ENCODE measurements at regions of chr22 and their contacts with region 1.

Region 1: DNA sequence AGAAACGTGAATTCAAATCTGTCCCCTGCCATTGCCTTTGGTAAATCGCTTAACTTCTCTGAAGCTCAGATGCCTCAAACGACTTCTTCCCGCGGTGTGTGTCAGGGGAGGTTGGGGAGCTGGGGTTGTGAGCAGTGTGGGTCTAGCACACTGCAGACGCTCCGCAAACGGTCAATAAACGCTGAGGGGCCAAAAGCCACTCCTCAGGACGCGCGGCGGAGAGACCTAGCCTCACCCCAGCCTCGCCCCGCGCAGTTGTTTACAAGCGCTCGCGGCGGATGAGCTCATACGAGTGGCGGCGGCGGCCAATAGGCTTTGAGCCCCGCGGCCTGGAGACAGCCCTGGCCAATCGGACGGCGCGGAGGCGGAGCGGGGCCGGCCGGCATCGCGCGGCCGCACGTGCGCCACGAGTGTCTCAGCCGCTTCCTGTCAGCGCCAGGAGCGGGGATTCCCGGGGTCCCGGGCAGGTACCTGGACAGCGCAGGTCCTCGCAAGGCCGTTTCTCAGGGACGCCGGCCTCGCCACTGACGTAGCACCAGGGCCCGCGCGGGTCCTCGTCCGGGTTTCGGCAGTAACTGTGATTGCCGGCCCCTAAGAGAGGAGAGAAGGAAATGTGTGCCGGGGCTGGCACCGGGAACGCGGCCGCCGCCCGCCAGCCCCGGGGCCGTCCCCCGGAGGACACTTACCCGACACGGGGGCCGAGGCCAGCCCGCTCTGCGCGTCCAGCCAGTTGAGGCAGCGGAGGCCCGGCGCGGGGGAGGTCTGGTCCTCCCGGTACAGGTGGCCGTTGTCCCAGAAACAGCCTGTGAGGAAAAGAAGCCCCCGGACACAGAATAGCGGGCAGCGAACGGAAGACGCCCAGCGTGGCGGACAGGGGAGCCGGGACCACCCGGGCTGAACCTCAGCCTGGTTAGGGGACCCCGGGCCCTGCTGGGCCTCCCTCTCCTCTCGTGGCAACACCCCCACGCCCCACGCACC is 1.5 kb downstream of the PIK3IP1 start:
- DNase-seq: peak; percentile 93
- H3K4me3 Mint-ChIP-seq: peak overlapping the region; percentile 82
- H3K27ac Mint-ChIP-seq: peak overlapping the region; percentile 70
- H3K4me1 Mint-ChIP-seq: peaks cover 13% of the 10 kb centered on the region
- H3K27me3 Mint-ChIP-seq: no peaks in the 10 kb centered on the region
- CTCF ChIP-seq: no peak

Region 2: DNA sequence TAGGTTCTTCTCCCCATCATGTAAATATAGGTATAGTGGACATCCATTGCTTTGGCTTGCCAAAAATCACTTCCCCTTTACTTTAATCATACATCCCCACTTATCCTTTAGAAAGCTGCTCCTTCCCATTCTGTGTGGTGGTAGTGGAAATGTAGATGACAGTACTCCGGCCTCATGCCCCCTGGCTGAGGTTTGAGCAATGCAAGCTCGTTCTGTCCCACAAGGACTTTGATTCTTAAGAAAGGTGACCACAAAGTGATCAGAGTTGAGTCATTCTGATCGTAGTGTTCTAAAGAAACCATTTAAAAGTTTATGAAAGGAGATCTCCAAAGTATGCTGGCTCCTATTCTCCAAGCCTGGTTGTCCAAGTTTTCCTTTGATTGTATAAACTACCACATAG is 310.9 kb before region 1 on chr22:
- CTCF ChIA-PET with region 1: no interaction called
- POLR2A ChIA-PET with region 1: no interaction called
- intact Hi-C with region 1: no loop called
- DNase-seq: no peak
- H3K4me3 Mint-ChIP-seq: no peak overlapping the region
- H3K27ac Mint-ChIP-seq: no peak overlapping the region
- H3K4me1 Mint-ChIP-seq: no peaks in the 10 kb centered on the region
- H3K27me3 Mint-ChIP-seq: no peaks in the 10 kb centered on the region
- CTCF ChIP-seq: no peak

Region 3: DNA sequence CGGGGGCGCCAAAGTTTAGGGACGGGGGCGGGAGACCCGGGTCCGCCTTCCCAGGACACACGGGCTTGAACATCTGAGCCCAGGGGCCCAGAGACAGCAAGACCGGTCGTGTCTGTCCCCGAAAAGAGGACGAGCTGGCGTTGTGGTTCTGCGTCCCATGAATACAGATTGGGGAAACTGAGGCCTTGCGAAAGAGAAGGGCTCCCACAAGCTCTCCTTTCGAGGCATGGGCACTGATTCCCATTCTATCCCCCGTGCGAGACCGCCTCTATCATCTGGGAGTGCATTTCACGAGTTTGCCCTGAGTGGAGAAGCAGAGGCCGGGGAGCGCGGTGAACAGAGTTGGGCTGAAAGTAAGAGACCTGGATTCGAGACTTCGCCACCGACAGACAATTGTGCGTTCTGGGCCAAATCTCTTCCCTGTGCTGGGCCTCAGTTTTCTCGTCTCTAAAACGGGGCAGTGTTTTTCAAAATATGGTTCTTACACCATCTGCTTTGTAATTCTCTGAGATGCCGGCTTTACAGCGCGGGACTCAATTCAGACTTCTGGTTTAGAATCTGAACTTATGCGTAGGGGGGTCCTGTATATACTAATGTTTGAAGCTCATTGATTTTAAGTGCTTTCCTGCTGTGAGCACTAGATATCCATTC is 130.3 kb before region 1 on chr22:
- CTCF ChIA-PET with region 1: interaction called, 3 read pairs
- POLR2A ChIA-PET with region 1: interaction called, 12 read pairs
- intact Hi-C with region 1: no loop called
- DNase-seq: no peak
- H3K4me3 Mint-ChIP-seq: peak overlapping the region; percentile 89
- H3K27ac Mint-ChIP-seq: peak overlapping the region; percentile 97
- H3K4me1 Mint-ChIP-seq: peaks cover 14% of the 10 kb centered on the region
- H3K27me3 Mint-ChIP-seq: no peaks in the 10 kb centered on the region
- CTCF ChIP-seq: no peak

Region 4: GRCh38 chr22:31272522-31273446 is 18.0 kb before region 1 on chr22:
- CTCF ChIA-PET with region 1: interaction called, 17 read pairs
- POLR2A ChIA-PET with region 1: interaction called, 26 read pairs
- intact Hi-C with region 1: no loop called
- DNase-seq: peak; percentile 76
- H3K4me3 Mint-ChIP-seq: no peak overlapping the region
- H3K27ac Mint-ChIP-seq: no peak overlapping the region
- H3K4me1 Mint-ChIP-seq: peaks cover 8% of the 10 kb centered on the region
- H3K27me3 Mint-ChIP-seq: no peaks in the 10 kb centered on the region
- CTCF ChIP-seq: peak; percentile 66

Region 5: DNA sequence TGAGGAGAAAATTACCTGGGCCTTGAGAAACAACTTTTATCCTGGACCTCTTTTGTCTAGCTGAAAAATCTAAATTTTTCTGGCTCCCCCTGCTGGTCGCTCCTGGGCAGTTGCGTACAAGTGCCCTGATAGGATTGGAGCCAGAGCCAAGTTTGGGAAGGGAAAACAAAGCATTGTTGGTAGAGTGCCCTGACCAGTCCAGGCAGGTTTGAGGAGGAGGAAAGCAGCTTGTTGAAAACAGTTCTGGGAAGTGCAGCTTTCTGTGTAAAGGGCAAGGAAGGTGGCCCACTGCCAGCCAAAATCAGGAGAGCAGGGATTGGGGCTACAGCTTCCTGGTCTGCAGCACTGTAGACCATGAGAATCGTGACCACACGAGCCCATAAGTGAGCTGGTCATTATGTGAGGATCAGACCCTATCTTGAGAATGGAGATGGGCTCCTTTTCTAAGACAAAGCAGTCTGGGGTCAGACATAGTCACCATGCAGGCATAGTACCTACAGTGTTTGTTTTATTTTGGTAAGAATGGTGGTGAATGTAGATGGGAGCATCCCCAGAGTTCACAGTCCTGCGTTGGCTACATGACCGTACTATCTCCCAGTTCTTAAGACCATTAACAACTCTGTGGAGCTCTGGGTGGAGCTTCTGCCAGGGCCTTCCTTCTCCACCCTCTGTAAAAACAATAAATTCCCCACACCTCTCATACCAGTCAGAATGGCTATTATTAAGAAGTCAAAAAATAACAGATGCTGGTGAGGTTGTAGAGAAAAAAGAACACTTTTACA is 22.8 kb after region 1 on chr22:
- CTCF ChIA-PET with region 1: interaction called, 65 read pairs
- POLR2A ChIA-PET with region 1: interaction called, 207 read pairs
- intact Hi-C with region 1: loop called (anchors 2 kb)
- DNase-seq: peak; percentile 95
- H3K4me3 Mint-ChIP-seq: no peak overlapping the region
- H3K27ac Mint-ChIP-seq: peak overlapping the region; percentile 52
- H3K4me1 Mint-ChIP-seq: peaks cover 6% of the 10 kb centered on the region
- H3K27me3 Mint-ChIP-seq: no peaks in the 10 kb centered on the region
- CTCF ChIP-seq: peak; percentile 71

Region 6: DNA sequence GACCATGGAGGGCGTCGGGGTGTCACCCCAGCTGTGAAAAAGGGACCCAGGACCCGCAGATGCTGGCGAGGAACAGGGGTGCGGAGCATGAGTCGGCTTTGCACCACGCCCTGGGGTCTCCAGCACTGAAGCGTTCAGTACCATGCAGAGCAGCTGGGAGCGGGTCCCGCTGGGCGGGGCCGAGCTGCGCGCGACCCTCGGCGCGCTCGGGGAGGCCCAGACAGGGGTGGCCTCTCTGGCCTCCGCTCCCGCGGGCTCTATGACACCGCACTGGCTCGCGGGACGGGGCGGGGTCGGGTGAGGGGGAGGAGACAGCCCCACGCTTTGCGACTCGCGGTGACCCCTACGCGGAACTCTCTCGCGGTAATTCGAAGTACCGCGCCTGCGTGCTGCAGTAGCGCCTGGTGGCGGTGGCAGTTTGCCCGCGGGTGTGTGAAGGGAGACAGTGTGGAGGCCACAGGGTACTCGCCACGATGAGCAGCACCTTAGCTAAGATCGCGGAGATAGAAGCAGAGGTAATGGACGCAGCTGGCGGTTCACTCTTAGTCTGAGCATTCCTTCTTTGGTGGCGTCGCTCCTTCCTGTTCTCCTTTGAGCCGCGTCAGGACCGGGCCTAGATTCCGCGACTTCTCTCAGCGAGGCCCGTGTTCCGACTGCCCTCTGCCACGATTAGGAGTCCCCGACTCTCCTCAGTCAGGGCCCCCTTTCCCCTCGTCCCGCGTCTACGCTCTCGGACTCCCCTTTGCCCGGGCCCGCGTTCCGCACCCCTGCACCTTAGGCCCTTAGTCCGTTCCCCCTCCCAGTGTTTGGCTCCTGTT is 108.6 kb after region 1 on chr22 and contains the start of gene DRG1:
- CTCF ChIA-PET with region 1: no interaction called
- POLR2A ChIA-PET with region 1: interaction called, 17 read pairs
- intact Hi-C with region 1: no loop called
- DNase-seq: peak; percentile 92
- H3K4me3 Mint-ChIP-seq: peak within 1 kb of the TSS; percentile 84
- H3K27ac Mint-ChIP-seq: peak within 1 kb of the TSS; percentile 94
- H3K4me1 Mint-ChIP-seq: no peaks in the 10 kb centered on the region
- H3K27me3 Mint-ChIP-seq: no peaks in the 10 kb centered on the region
- CTCF ChIP-seq: no peak
- total RNA-seq, gene DRG1: 84.8 and 101 TPM in 2 replicates

Measured in MCF 10A (cell line).